Right ventricle myocardium inferior (tissue), 1 donor: ENCODE measurements at regions of chr22 and their contacts with region 1.

Region 1: DNA sequence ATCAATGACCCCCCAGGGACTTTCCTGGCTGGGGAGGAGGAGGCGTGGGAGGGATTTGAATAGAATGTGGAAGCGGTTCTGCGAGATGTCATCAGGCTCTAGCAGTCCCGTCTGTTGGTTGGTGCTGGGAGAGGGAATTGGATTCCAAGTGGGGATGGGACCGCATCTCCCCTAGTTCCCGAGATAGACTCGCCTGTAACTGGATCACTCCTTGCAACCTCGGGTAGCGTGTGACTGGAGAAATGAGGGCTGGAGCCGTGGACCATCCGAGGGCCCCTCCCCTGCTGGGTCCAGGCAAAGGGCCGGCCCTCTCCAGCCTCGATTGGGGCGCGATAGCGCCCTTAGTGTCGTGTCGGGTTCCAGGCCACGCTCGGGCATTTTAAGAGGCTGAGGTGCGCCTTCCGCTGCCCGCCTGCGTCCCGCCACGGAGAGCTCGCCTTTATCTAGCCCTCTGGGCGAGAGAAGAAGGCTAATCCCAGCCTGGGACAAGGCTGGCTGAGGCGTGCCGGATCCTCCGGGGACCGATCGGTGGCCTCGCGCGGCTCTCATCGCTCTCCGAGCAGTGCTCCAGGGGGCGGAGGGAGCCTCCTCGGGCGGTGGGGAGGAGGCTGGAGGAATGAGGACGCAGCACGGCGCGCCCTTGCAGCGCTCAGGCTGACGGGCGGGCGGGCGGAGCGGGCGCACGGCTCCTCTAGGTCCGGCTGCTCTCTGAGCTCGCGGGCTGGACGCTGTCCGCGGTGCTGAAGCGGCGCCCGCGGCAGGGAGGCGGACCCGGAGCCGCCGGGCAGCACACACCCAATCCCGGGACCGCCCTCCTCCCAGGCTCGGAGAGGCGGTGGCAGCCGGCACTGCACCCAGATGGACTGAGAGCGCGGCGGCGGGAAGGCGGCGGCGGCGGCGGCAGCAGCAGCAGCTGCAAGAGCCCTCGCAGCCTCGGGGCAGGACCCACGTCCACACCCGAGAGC is 107.8 kb downstream of the OSBP2 start:
- DNase-seq: peak; percentile 90
- ATAC-seq: peak; percentile 100

Region 2: GRCh38 chr22:30876915-30877553 is 74.5 kb after region 1 on chr22:
- intact Hi-C with region 1: loop called (anchors 5 kb)
- DNase-seq: no peak
- ATAC-seq: peak; percentile 62